ENCODE measurements at regions of chr1 and their contacts with region 1.

Region 1: DNA sequence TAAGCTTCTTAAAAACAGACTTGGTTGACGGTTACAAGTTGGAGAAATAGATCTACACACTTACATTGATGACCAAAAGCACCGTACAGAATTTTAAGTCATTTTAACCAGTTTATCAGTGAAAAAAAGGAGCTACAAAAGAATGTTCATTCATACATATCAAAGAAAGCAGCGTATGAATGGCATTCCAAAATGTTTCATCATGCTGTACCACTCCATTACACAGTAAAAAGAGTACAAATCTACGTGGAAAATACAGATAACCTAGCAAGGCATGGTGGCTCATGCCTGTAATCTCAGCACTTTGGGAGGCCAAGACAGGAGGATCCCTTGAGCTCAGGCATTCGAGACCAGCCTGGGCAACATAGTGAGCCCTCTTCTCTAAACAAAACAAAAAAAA is 40.3 kb downstream of the ZZZ3 start:
- DNase-seq: no peak
- ATAC-seq: no peak
- H3K4me3 ChIP-seq: no peak overlapping the region
- H3K4me1 ChIP-seq: no peaks in the 10 kb centered on the region
- CTCF ChIP-seq: no peak

Region 2: DNA sequence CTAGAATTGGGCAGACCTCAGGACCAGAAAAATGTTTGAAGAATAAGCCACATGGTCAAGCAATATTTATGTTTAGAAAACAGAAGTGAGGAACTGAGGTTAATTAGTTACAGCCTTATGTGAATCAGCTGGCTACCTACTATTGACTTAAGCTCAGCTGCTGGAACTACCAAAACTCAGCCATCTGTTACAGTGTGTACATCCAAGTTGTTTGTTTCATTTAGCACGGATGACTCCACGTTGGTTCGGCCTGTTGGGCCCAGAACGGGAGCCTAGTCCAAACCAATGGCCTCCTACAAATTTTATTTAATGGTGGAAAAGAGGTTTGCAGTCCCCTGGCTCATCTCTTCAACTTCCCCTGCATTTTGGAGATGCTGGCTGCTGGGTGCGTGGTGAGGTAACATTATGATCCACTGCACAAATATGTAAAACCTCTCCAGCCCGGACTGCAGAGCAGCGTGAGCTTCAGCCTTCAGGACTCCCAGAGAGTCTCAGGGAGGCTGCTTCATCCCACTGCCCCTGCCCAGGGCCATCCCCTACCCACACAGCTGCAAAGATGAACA is 103.2 kb before region 1 on chr1:
- intact Hi-C with region 1: no loop called
- DNase-seq: no peak
- ATAC-seq: peak; percentile 78
- H3K4me3 ChIP-seq: no peak overlapping the region
- H3K4me1 ChIP-seq: no peaks in the 10 kb centered on the region
- CTCF ChIP-seq: no peak

Region 3: GRCh38 chr1:77824083-77824482 is 181.9 kb after region 1 on chr1:
- intact Hi-C with region 1: loop called in 1 of 2 experiments (anchors 5 kb)
- DNase-seq: no peak
- ATAC-seq: no peak
- H3K4me3 ChIP-seq: no peak overlapping the region
- H3K4me1 ChIP-seq: no peaks in the 10 kb centered on the region
- CTCF ChIP-seq: no peak

Measured in mucosa of descending colon (tissue), 3 donors.